Body of pancreas (tissue), 4 donors: ENCODE measurements at regions of chr17 and their contacts with region 1.

Region 1: DNA sequence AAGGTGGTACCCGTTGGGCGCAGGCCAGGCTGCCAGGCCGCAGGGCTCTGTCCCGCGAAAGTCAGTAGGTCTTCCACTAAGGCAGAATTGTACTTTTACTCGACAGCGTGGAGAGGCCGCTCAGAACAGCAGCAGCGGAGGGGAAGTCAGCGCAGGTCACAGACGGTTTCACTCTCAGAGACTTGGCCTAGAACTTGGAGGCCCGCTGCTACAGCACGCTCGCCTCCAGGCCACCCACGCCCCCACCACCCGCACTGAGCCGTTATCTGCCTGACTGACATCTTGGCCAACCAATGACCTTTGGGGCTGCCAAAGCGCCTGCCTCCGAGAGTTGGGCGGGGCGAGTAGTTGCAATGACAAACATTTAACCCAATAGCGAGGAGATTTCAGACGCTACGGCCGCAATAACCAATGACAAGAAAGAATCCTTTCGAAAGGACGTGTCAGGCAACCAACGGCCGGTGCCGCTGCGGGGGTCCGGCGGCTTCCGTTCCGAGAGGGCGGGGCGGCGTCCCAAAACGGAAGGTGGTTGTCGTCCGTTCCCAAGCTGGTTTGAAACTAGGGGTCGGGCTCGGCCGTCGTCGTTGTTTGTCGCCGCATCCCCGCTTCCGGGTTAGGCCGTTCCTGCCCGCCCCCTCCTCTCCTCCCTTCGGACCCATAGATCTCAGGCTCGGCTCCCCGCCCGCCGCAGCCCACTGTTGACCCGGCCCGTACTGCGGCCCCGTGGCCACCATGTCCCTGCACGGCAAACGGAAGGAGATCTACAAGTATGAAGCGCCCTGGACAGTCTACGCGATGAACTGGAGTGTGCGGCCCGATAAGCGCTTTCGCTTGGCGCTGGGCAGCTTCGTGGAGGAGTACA is at the start of gene DCAF7:
- DNase-seq: peak; percentile 100
- ATAC-seq: peak; percentile 98
- H3K4me3 ChIP-seq: peak within 1 kb of the TSS; percentile 64 to 100
- H3K27ac ChIP-seq: peak within 1 kb of the TSS; percentile 79 to 98 (median 92)
- H3K4me1 ChIP-seq: peaks cover 34% of the 10 kb centered on the region
- H3K27me3 ChIP-seq: no peaks in the 10 kb centered on the region
- CTCF ChIP-seq: peak in 1 of 7 experiments; percentile 0
- POLR2A ChIP-seq: peak; percentile 39 to 81 (median 80)
- total RNA-seq, gene DCAF7: 16.8 to 16.9 TPM

Region 2: DNA sequence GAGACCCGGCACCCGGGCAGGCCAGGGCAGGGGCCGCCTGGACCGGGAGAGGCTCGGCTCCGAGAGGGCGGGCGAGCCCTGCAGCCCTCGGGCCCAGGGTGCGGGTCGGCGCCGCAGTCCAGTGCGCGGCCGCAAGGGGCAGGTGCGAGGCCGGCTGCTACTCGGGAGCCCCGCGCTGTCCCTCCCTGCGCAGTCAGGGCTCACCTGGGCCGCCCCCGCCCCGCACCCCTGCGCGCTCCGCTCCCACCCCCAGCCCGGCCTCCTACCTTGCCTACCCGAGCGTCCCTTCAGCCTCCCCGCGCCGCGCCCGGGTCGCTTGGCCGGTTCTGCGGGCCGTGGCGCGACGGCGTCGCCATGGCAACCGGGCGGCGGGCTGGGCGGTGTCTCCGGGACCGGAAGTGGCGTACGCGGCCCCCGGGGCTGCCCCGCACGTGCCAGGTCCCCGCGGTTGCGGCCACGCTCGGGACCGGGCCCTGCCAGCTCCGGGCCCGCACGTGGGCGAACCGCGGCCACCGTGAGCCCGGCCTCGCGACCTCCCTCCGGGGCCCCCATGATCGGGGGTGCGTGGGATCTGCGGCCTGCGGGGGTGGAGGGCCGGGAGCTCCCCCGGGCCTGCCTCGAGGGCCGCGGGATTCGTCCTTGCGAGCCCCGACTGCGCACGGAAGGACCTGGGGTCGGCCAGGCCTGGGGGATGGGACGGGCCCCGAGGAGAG is 104.0 kb before region 1 on chr17 and contains the start of gene CYB561:
- intact Hi-C with region 1: loop called (anchors 10 kb)
- DNase-seq: peak; percentile 87 to 91 (median 88)
- ATAC-seq: peak; percentile 83
- H3K4me3 ChIP-seq: peak within 1 kb of the TSS; percentile 42 to 49
- H3K27ac ChIP-seq: peak within 1 kb of the TSS; percentile 89 to 98 (median 93)
- H3K4me1 ChIP-seq: peaks cover 56% of the 10 kb centered on the region
- H3K27me3 ChIP-seq: no peaks in the 10 kb centered on the region
- CTCF ChIP-seq: peak; percentile 45 to 71 (median 69)
- POLR2A ChIP-seq: peak; percentile 38 to 58 (median 50)
- total RNA-seq, gene CYB561: 61.5 to 137 TPM